GM10248 (cell line): ENCODE measurements at regions of chr7 and their contacts with region 1.

Region 1: GRCh38 chr7:90312745-90313144 is 8.4 kb downstream of the FAM237B start:
- DNase-seq: no peak
- CTCF ChIP-seq: peak; percentile 17

Region 2: GRCh38 chr7:90298145-90299038 is 14.4 kb before region 1 on chr7:
- CTCF ChIA-PET with region 1: interaction called, 12 read pairs
- POLR2A ChIA-PET with region 1: no interaction called
- DNase-seq: peak; percentile 28
- CTCF ChIP-seq: peak; percentile 71

Region 3: DNA sequence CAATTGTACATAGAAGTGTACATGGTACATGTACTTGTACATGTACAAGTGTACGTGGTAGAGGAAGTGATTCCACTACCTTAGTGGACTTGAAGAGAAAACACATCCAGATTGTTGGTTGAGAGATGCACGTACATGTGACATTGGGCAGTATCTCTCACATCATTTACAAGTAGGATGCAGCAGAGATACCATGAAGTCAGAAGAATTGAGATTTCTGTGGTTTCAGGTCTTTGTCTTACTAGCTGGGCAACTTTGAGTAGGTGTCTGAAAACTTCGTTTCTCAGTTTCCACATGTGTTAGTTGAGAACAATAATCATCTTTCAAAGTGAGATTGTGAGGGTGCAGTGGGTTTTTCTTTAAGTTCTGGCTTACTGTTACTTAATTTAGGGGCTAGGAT is 112.0 kb after region 1 on chr7:
- CTCF ChIA-PET with region 1: interaction called, 48 read pairs
- POLR2A ChIA-PET with region 1: no interaction called
- DNase-seq: peak; percentile 36
- CTCF ChIP-seq: no peak

Region 4: DNA sequence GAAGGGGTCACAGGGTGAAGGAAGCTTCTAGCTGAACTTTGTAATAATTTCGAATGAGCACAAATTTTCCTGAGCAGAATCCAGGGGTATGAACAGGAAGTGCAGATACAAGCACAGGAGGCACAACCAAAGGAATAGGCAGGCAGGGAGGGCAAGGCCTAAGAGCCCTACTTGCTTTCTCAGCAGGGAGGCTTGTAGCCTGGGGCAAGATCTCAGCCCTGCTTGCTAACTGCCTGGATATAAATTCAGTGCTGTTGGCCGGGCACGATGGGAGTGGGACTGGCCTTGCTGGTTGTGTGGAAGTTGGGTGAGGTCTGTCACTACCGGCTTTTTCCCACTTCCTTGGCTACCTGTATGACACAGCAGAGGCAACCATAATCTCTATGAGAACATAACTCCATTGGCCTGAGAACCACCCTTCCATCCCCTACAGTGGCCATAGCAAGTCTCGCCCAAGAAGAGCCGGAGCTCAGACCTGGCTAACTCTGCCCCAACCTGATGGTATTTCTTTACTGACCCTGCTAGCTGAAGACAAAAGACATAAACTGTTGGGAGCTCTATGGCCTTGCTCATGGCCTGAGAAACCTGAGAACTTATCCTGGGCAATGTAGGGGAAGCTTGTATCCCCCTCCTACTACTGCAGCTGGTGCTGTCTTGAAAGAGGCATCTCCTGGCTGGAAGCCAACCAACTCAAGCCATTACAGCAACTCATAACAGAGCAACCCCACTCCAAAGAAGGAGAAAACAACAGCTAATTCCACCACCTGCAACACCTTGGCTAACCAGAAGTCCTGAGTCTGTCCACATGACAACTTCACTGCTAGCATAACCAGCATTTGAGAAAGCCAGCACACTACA is 118.1 kb after region 1 on chr7:
- CTCF ChIA-PET with region 1: interaction called, 48 read pairs
- POLR2A ChIA-PET with region 1: no interaction called
- DNase-seq: no peak
- CTCF ChIP-seq: no peak